Activated B cell treated with CpG ODN at 0.5 μM for 24 hours (primary cell): ENCODE measurements at regions of chr2 and their contacts with region 1.

Region 1: DNA sequence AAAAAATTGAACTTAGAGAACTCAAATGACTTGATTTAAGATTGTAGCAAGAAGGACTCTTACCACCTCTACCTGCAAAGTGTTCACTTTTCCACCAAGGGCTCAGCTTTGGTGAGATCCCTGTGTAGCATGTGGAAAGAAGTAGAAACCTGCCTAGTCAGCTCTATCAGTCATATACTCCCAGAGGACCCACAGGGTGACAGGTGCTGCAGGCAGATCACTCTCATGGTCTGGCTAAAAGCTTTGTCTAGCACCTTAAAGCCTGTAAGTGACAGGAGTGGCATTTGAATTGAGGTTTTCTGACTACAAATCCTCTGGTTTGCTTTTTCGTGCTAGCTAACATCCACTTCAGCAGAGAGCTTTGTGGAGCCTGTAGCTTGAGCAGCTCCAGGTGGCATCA is 18.7 kb upstream of the NEMP2 start:
- DNase-seq: no peak
- ATAC-seq: no peak
- H3K4me3 Mint-ChIP-seq: no peak overlapping the region
- H3K27ac Mint-ChIP-seq: no peak overlapping the region
- H3K4me1 Mint-ChIP-seq: peaks cover 4% of the 10 kb centered on the region
- H3K27me3 Mint-ChIP-seq: no peaks in the 10 kb centered on the region
- CTCF ChIP-seq: no peak

Region 2: GRCh38 chr2:190664240-190664639 is 111.0 kb after region 1 on chr2:
- CTCF ChIA-PET with region 1: no interaction called
- POLR2A ChIA-PET with region 1: interaction called, 10 read pairs
- intact Hi-C with region 1: no loop called
- DNase-seq: no peak
- ATAC-seq: no peak
- H3K4me3 Mint-ChIP-seq: no peak overlapping the region
- H3K27ac Mint-ChIP-seq: no peak overlapping the region
- H3K4me1 Mint-ChIP-seq: peaks cover 2% of the 10 kb centered on the region
- H3K27me3 Mint-ChIP-seq: no peaks in the 10 kb centered on the region
- CTCF ChIP-seq: no peak

Region 3: GRCh38 chr2:190843874-190844699 is 290.8 kb after region 1 on chr2:
- CTCF ChIA-PET with region 1: no interaction called
- POLR2A ChIA-PET with region 1: no interaction called
- intact Hi-C with region 1: no loop called
- DNase-seq: no peak
- ATAC-seq: peak; percentile 45
- H3K4me3 Mint-ChIP-seq: no peak overlapping the region
- H3K27ac Mint-ChIP-seq: no peak overlapping the region
- H3K4me1 Mint-ChIP-seq: no peaks in the 10 kb centered on the region
- H3K27me3 Mint-ChIP-seq: no peaks in the 10 kb centered on the region
- CTCF ChIP-seq: no peak